A673 (cell line): ENCODE measurements at regions of chr6 and their contacts with region 1.

Region 1: GRCh38 chr6:120826253-120826652 is 508.0 kb downstream of the TBC1D32 start:
- DNase-seq: peak; percentile 1
- H3K4me3 ChIP-seq: no peak overlapping the region
- H3K27ac ChIP-seq: no peak overlapping the region
- H3K4me1 ChIP-seq: no peaks in the 10 kb centered on the region
- H3K27me3 ChIP-seq: no peaks in the 10 kb centered on the region
- CTCF ChIP-seq: peak; percentile 47

Region 2: GRCh38 chr6:119742188-119742803 is 1084.0 kb before region 1 on chr6:
- CTCF ChIA-PET with region 1: no interaction called
- POLR2A ChIA-PET with region 1: no interaction called
- intact Hi-C with region 1: loop called (anchors 5 kb)
- DNase-seq: peak; percentile 51
- H3K4me3 ChIP-seq: no peak overlapping the region
- H3K27ac ChIP-seq: no peak overlapping the region
- H3K4me1 ChIP-seq: no peaks in the 10 kb centered on the region
- H3K27me3 ChIP-seq: no peaks in the 10 kb centered on the region
- CTCF ChIP-seq: peak; percentile 88

Region 3: DNA sequence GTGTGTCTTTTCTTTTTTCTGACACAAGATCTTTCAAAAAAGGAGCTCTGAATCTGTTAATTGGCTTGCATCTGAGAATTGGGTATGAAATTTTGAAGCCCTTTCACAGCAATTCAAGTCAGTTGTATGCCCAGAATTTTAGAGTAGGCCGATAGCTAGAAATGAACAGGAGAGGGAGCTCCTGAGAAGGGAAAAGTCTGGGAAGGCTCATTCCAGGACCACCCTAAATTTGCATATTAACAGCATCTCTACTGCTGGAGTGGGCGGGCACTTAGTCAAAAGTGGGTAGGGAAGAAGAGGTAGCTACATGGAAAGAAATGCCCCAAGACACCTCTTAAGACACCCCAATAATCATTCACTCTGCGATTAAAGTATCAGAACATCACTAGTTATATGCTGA is 420.3 kb before region 1 on chr6:
- CTCF ChIA-PET with region 1: no interaction called
- POLR2A ChIA-PET with region 1: no interaction called
- intact Hi-C with region 1: loop called (anchors 2 kb)
- DNase-seq: peak; percentile 43
- H3K4me3 ChIP-seq: no peak overlapping the region
- H3K27ac ChIP-seq: no peak overlapping the region
- H3K4me1 ChIP-seq: no peaks in the 10 kb centered on the region
- H3K27me3 ChIP-seq: no peaks in the 10 kb centered on the region
- CTCF ChIP-seq: peak; percentile 51